Astrocyte of the cerebellum (primary cell): ENCODE measurements at regions of chr7 and their contacts with region 1.

Region 1: GRCh38 chr7:91473619-91474018 is 209.4 kb downstream of the FZD1 start:
- DNase-seq: no peak
- H3K4me3 ChIP-seq: no peak overlapping the region
- CTCF ChIP-seq: no peak

Region 2: GRCh38 chr7:91416155-91416865 is 57.3 kb before region 1 on chr7:
- in situ Hi-C with region 1: loop called (anchors 5 kb)
- DNase-seq: no peak
- H3K4me3 ChIP-seq: no peak overlapping the region
- CTCF ChIP-seq: no peak

Region 3: GRCh38 chr7:92576296-92576695 is 1102.7 kb after region 1 on chr7:
- in situ Hi-C with region 1: no loop called
- DNase-seq: no peak
- H3K4me3 ChIP-seq: no peak overlapping the region
- CTCF ChIP-seq: no peak